ENCODE measurements at regions of chr3 and their contacts with region 1.

Region 1: DNA sequence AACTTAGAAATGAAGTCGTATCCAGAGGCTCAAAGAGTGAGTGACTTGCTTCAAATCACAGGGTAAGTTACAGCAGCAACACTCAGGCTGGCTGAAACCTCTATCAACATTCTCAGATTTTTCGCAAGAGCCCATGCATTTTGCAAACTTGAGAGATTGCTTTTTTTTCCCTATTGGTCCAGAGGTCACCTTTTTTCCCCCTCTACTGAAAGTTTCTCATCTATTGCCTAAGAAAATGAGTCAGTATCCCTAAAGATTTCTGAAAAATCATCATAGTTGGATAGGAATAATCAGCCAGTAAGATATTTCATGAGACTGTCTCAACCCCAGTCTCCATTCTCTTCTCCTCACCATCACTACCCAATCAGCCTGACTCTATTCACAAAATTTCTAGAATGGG is 410.6 kb downstream of the FOXP1 start:
- DNase-seq: no peak
- ATAC-seq: no peak
- H3K4me3 Mint-ChIP-seq: no peak overlapping the region
- H3K27ac Mint-ChIP-seq: peak overlapping the region; percentile 47
- H3K4me1 Mint-ChIP-seq: peaks cover 33% of the 10 kb centered on the region
- H3K27me3 Mint-ChIP-seq: no peaks in the 10 kb centered on the region
- CTCF ChIP-seq: no peak

Region 2: DNA sequence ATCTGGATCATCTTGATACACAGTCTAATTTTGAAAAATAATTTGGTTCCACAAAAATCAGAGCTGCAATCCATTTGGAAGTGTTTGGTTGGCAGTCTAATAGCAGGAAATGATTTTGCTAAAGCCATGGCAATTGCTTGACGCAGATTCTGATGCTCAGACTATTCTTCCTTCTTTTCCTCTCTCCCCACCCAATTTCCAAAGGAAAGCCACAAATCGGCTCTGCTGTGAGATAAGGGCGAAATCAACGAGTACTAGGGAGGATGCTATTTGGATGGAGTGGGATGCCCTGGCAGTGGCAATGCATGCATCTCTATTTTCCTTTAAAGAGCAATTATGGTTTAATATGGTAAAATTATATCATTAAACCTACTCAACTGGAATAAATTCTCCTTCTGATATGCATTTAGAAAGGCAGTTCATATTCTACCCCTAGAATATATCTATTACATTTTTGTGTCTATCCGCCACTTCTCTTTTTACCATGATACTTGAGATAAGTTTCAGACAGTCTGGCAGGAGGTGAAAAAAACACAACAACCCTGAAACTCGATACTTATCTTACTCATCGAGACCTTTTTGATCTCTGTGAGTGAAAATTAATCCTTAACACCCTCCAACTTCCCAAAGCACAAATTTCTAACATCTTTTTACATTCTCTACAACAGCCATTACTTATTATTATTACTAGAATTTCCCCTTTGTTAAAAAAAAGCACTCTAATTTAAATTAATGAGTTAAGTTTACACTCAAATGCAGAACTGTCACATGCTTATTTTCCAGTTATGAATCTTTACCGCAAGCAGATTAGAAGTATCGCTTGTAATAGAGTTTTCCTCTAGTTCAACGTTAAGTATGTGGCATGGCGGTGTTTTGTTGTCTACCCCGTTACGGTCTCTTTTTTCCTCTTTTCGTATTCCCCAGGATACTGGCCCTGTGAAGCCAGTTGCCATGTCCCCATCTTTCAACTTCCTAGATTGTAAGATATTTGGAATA is 22.7 kb before region 1 on chr3:
- CTCF ChIA-PET with region 1: no interaction called
- POLR2A ChIA-PET with region 1: interaction called, 3 read pairs
- intact Hi-C with region 1: loop called (anchors 2 kb)
- DNase-seq: no peak
- ATAC-seq: peak; percentile 69
- H3K4me3 Mint-ChIP-seq: peak overlapping the region; percentile 52
- H3K27ac Mint-ChIP-seq: peak overlapping the region; percentile 86
- H3K4me1 Mint-ChIP-seq: peaks cover 28% of the 10 kb centered on the region
- H3K27me3 Mint-ChIP-seq: no peaks in the 10 kb centered on the region
- CTCF ChIP-seq: no peak

Region 3: DNA sequence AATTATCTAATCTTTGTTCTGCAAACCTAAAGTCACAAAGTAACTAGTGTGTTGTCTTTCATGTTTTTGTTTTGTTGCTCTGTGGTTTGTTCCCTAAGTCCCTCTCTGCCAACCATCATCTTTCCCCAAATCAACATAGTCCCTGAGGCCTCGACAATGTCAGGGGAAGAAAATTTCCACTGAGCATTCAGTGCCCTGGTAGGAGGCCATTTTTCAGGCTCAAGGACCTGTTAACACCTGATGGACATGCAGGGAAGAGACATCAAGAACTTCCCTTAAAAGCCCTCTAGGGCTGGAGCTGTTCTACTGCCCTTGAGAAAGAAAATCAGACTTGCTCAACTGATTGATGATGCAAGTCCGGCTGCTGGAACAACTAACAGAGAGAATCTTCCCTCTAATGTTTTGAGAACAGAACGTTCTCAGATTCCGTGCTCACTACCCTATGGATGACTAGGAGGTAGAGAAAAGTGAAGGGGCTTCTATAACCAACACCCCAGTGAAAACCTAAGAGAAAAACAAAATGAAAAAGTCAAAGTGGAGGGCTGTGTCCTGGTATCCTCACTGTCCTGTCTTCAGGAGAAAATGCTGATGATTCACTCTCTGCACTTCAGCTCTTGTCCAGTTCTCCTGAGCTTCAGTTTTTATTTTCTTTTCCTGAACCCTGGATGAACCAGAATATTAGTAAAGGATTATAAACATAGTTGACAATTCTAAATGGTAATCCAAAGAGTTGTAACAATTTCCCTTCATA is 37.5 kb after region 1 on chr3:
- CTCF ChIA-PET with region 1: no interaction called
- POLR2A ChIA-PET with region 1: no interaction called
- intact Hi-C with region 1: no loop called
- DNase-seq: no peak
- ATAC-seq: no peak
- H3K4me3 Mint-ChIP-seq: no peak overlapping the region
- H3K27ac Mint-ChIP-seq: peak overlapping the region; percentile 68
- H3K4me1 Mint-ChIP-seq: peaks cover 79% of the 10 kb centered on the region
- H3K27me3 Mint-ChIP-seq: no peaks in the 10 kb centered on the region
- CTCF ChIP-seq: no peak

Measured in activated B cell treated with CpG ODN at 0.5 μM for 24 hours (primary cell).